ENCODE measurements at regions of chr2 and their contacts with region 1.

Region 1: GRCh38 chr2:31333527-31334183 is 80.9 kb downstream of the XDH start:
- DNase-seq: peak; percentile 50 to 83 (median 61)
- H3K4me3 ChIP-seq: no peak overlapping the region
- H3K4me3 Mint-ChIP-seq: no peak overlapping the region
- H3K27ac ChIP-seq: no peak overlapping the region
- H3K27ac Mint-ChIP-seq: no peak overlapping the region
- H3K4me1 ChIP-seq: no peaks in the 10 kb centered on the region
- H3K4me1 Mint-ChIP-seq: no peaks in the 10 kb centered on the region
- H3K27me3 ChIP-seq: no peaks in the 10 kb centered on the region
- H3K27me3 Mint-ChIP-seq: peaks cover 0 to 8% of the 10 kb centered on the region in 2 donors

Region 2: GRCh38 chr2:31170071-31170698 is 163.5 kb before region 1 on chr2:
- CTCF ChIA-PET with region 1: interaction called, 15 read pairs
- POLR2A ChIA-PET with region 1: no interaction called
- DNase-seq: peak; percentile 14 to 60 (median 17)
- H3K4me3 ChIP-seq: no peak overlapping the region
- H3K4me3 Mint-ChIP-seq: no peak overlapping the region
- H3K27ac ChIP-seq: no peak overlapping the region
- H3K27ac Mint-ChIP-seq: no peak overlapping the region
- H3K4me1 ChIP-seq: no peaks in the 10 kb centered on the region
- H3K4me1 Mint-ChIP-seq: no peaks in the 10 kb centered on the region
- H3K27me3 ChIP-seq: no peaks in the 10 kb centered on the region
- H3K27me3 Mint-ChIP-seq: peaks cover 4 to 6% of the 10 kb centered on the region in 2 donors

Measured in CD8-positive, alpha-beta memory T cell (primary cell).